Naive thymus-derived CD4-positive, alpha-beta T cell (primary cell): ENCODE measurements at regions of chr11 and their contacts with region 1.

Region 1: DNA sequence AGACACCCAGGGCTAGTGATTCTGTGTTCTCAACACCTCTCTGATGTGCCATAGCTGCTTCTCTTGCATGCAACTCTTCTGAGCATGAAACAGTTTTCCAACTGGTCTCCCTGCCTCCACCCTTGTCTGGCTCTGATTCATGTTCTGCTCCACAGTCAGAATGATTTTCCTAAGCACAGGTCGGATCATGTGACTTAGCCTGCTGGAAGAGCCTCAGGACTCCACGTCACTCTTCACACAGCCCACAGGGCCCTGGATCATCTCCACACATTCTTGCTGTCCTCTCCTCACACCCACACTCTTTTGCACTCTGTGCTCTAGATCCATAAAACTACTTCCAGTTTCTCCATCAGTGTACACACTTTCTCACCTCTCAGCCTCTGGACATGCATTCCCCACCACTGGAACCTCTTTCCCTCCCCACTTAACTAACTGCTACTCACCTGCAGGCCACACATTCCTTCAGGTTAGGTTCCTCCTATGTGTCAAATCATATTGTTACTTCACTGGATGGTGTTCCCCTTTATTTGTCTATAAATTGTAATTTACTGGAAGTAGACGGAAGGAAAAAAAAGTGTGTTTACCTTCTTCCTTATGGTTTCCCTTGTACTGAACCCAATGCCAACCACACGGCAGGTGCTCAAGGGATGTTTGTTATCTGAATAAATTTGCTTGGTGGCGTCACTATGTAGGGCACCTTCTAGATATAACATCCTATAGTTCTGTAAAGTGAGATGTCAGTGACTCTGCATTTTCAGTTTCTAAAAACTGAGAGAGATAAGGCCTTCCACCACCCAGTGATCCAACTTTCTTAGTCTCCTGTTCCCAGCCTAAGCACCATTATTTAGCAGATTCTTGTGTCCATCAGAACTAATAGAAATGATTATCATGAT is 133.7 kb downstream of the ETS1 start:
- DNase-seq: peak in 1 of 9 donors; percentile 44
- ATAC-seq: peak; percentile 54
- H3K4me3 ChIP-seq: no peak overlapping the region
- H3K4me3 Mint-ChIP-seq: peak overlapping the region in 5 of 10 donors; percentile 0 to 64 (median 22)
- H3K27ac ChIP-seq: peak overlapping the region; percentile 33
- H3K27ac Mint-ChIP-seq: peak overlapping the region; percentile 58 to 97 (median 87)
- H3K4me1 ChIP-seq: peaks cover 0 to 12% of the 10 kb centered on the region in 2 donors
- H3K4me1 Mint-ChIP-seq: peaks cover 27 to 85% (median 60%) of the 10 kb centered on the region in 7 donors
- H3K27me3 ChIP-seq: no peaks in the 10 kb centered on the region
- H3K27me3 Mint-ChIP-seq: no peaks in the 10 kb centered on the region

Region 2: DNA sequence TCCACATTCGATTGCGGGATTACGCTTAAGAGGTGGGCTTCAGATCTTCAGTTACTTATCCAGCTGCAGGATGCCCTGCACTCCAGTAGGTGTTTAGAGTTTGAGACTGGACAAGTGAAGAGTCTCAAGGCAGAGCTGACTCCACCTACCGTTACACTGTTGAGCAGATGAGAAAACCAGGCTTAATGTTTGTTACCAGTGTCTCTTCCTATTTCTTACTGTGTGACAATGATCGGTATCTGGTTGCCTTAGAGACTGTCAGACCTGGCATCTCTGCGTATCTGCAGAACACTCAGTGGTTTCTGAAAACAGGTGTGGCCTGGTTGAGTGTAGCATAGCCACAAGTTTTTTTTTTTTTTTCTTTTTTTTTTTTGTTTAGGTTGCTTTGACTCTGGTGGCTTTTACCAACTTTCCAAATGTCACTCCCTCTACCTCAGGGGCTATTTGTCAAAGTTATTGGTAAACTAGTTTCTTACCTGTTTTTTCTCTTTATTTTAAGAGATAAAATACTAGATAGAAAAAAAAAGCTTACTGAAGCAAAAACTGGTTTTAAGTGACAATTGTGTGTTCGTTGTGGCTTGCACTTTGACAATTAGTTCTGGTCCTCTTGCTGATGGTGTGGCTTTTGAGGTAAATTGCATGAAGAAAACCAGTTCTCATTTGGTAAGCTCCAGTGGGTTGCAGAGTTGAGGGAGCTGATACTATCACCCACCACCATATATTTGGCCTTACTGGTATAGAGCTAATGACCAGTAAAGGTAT is 151.1 kb before region 1 on chr11:
- CTCF ChIA-PET with region 1: interaction called, 3 read pairs
- POLR2A ChIA-PET with region 1: interaction called, 19 read pairs
- intact Hi-C with region 1: no loop called
- DNase-seq: peak; percentile 39 to 97 (median 92)
- ATAC-seq: peak; percentile 92
- H3K4me3 ChIP-seq: peak overlapping the region; percentile 52
- H3K4me3 Mint-ChIP-seq: peak overlapping the region; percentile 81 to 98 (median 93)
- H3K27ac ChIP-seq: peak overlapping the region; percentile 98
- H3K27ac Mint-ChIP-seq: peak overlapping the region; percentile 93 to 100 (median 98)
- H3K4me1 ChIP-seq: peaks cover 83 to 95% of the 10 kb centered on the region in 2 donors
- H3K4me1 Mint-ChIP-seq: peaks cover 52 to 92% (median 88%) of the 10 kb centered on the region in 7 donors
- H3K27me3 ChIP-seq: no peaks in the 10 kb centered on the region
- H3K27me3 Mint-ChIP-seq: no peaks in the 10 kb centered on the region

Region 3: DNA sequence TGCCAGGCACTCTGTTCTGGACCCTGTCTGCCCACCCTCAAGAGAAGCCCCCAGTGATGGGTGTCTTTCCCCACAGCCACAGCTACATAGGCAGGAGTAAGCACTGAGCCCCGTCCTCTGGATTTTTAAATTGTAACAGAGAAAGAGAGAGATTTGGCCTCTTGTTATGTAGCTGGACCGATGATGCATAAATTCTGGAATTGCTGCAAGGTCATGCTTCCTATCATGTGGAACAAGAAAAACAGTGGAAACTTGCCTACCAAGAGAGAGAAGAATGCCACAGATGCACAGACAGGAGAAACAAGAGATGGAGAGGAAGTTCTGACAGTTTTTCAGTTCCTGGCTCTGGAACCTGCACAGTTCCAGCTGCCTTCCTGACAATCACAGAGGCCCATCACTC is 16.6 kb before region 1 on chr11:
- CTCF ChIA-PET with region 1: no interaction called
- POLR2A ChIA-PET with region 1: interaction called, 4 read pairs
- intact Hi-C with region 1: loop called in 1 of 2 experiments (anchors 2 kb)
- DNase-seq: no peak
- ATAC-seq: no peak
- H3K4me3 ChIP-seq: no peak overlapping the region
- H3K4me3 Mint-ChIP-seq: no peak overlapping the region
- H3K27ac ChIP-seq: no peak overlapping the region
- H3K27ac Mint-ChIP-seq: peak overlapping the region in 1 of 9 donors; percentile 7
- H3K4me1 ChIP-seq: no peaks in the 10 kb centered on the region
- H3K4me1 Mint-ChIP-seq: peaks cover 8 to 40% (median 24%) of the 10 kb centered on the region in 7 donors
- H3K27me3 ChIP-seq: no peaks in the 10 kb centered on the region
- H3K27me3 Mint-ChIP-seq: no peaks in the 10 kb centered on the region